Posterior vena cava (tissue), 2 donors: ENCODE measurements at regions of chr19 and their contacts with region 1.

Region 1: DNA sequence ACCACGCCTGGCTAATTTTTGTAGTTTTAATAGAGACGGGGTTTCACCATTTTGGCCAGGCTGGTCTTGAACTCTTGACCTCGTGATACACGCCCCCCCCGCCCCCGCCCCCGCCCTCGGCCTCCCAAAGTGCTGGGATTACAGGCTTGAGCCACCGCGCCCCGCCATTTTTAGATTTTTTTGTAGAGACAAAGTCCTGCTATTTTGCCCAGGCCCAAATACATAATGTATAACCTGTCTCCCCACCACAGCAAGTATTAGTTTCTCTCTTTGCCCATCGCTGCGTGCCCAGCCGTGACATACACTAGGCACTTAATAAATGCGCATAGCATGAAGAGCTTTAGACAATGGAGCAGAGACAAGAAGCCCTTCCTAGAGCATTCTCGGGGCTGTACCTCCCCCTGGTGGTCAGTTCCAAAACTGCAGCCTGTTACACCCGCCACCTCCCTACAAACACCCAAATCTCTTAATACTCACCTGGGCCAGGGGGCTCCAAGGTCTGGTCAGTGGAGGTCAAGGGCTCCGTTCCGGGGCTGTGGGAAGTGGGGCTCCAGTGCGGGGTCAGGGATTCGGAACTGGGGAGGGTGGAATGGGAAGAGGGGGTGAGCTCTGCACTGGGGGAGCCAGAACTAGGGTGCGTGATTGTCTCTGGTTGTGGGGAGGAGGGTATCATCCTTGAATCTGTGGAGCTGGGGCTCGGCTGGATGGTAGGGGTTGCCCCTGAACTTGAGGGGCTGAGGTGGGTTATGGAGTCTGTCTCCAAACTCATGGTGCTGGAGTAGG is 22.5 kb downstream of the IQCN start:
- DNase-seq: peak; percentile 91

Region 2: GRCh38 chr19:18117692-18118378 is 133.9 kb before region 1 on chr19:
- intact Hi-C with region 1: loop called in 1 of 2 experiments (anchors 5 kb)
- DNase-seq: peak; percentile 97

Region 3: GRCh38 chr19:18203863-18204393 is 47.9 kb before region 1 on chr19 and contains the start of gene RAB3A:
- intact Hi-C with region 1: loop called in 1 of 2 experiments (anchors 10 kb)
- DNase-seq: peak; percentile 100
- total RNA-seq, gene RAB3A: 1.9 to 2.9 TPM

Region 4: GRCh38 chr19:18214779-18215433 is 36.9 kb before region 1 on chr19:
- intact Hi-C with region 1: loop called in 1 of 2 experiments (anchors 5 kb)
- DNase-seq: no peak

Region 5: GRCh38 chr19:18274781-18275356 is 23.1 kb after region 1 on chr19:
- intact Hi-C with region 1: loop called in 1 of 2 experiments (anchors 1 kb)
- DNase-seq: peak; percentile 96

Region 6: DNA sequence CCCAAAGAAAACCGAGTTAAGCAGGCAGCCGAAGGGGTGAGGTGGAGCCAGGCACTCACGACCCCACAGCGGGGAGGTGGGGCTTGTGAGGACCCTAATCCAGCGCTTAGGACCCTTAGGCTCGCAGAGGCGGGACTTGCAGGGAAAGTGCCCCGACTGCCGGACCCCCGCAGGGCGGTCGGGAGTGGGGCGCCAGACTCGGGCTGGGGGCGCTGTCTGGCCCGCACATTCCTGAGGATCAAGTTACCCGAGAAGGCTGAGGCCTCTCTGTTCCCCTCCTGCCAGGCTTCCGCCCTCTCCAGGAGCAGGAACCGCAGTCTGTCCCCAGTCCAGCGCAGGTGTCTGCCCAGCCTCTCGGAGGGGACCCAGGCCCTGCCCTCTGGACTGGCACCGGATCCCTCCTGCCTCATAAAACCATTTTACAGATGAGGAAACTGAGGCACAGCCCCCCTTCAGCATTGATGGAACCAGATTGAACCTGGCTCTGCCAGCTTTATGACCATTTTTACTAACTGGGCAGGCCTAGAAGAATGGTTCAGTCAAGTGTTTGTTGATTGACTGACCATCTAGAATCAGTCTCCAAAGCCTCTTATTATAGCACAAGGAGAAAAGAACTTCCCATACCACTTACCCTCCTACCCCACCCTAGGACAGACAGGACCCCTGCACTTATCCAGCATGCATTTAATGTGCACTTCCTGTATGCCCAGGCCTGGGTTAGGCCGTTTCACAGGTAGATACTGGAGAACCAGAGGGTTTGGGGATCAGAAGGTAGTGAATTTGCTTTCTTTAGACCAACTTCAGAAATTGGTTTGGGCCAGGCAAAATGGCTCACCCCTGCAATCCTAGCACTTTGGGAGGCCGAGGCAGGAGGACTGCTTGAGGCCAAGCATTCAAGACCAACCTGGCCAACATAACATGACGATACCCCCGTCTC is 36.3 kb after region 1 on chr19:
- intact Hi-C with region 1: no loop called
- DNase-seq: no peak